ENCODE measurements at regions of chr19 and their contacts with region 1.

Region 1: DNA sequence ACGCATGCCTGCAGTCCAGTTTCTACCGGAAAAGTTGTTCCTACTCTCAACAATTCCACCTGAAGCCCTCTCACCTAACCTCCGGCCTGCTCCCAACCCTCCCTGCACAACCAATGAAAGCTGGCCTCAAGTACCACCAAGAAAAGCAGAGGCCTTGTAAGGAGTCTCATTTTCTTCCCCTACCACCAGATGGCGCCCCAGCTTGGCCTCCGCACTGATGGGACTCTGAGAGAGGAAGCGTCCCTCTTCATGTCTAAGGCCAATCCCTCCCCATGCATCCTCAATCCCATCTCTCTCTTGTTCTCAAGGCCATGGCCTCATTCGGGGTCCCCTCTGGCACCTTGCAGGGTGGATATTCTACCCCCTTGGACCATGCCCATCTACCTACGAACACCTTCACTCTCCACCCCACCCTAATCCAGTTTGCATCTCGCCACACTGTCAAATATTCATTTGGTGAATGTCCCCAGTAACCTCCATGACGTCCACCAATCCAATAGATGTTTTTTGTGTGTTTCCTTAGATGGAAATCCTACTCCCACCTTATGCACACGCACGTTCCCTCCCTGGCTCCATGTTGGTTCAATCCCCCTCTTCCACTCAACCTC is 412.8 kb downstream of the ZNF536 start:
- DNase-seq: peak; percentile 65
- H3K4me3 ChIP-seq: no peak overlapping the region
- H3K27ac ChIP-seq: no peak overlapping the region
- H3K4me1 ChIP-seq: no peaks in the 10 kb centered on the region
- H3K27me3 ChIP-seq: no peaks in the 10 kb centered on the region
- CTCF ChIP-seq: peak; percentile 57 to 77 (median 70)
- EP300 ChIP-seq: no peak
- POLR2A ChIP-seq: no peak

Region 2: GRCh38 chr19:31349160-31349881 is 564.4 kb after region 1 on chr19 and contains the start of gene TSHZ3:
- in situ Hi-C with region 1: loop called in 2 of 4 experiments (anchors 25 kb)
- intact Hi-C with region 1: no loop called
- DNase-seq: peak; percentile 72
- H3K4me3 ChIP-seq: peak within 1 kb of the TSS; percentile 71 to 97 (median 90)
- H3K27ac ChIP-seq: peak within 1 kb of the TSS; percentile 93 to 97 (median 96)
- H3K4me1 ChIP-seq: peaks cover 0 to 47% (median 18%) of the 10 kb centered on the region in 4 donors
- H3K27me3 ChIP-seq: peaks cover 87% of the 10 kb centered on the region
- CTCF ChIP-seq: no peak
- EP300 ChIP-seq: no peak
- POLR2A ChIP-seq: no peak
- total RNA-seq, gene TSHZ3: 3.0 to 6.4 (median 4.6) TPM

Region 3: GRCh38 chr19:32224371-32225244 is 1439.7 kb after region 1 on chr19:
- in situ Hi-C with region 1: no loop called
- intact Hi-C with region 1: loop called (anchors 10 kb)
- DNase-seq: peak; percentile 56
- H3K4me3 ChIP-seq: peak overlapping the region in 1 of 4 donors; percentile 32
- H3K27ac ChIP-seq: no peak overlapping the region
- H3K4me1 ChIP-seq: peaks cover 0 to 6% (median 1%) of the 10 kb centered on the region in 4 donors
- H3K27me3 ChIP-seq: peaks cover 32% of the 10 kb centered on the region
- CTCF ChIP-seq: peak; percentile 91 to 100 (median 100)
- EP300 ChIP-seq: no peak
- POLR2A ChIP-seq: no peak

Region 4: GRCh38 chr19:32475141-32476031 is 1690.4 kb after region 1 on chr19:
- in situ Hi-C with region 1: no loop called
- intact Hi-C with region 1: no loop called
- DNase-seq: no peak
- H3K4me3 ChIP-seq: no peak overlapping the region
- H3K27ac ChIP-seq: no peak overlapping the region
- H3K4me1 ChIP-seq: no peaks in the 10 kb centered on the region
- H3K27me3 ChIP-seq: no peaks in the 10 kb centered on the region
- CTCF ChIP-seq: no peak
- EP300 ChIP-seq: no peak
- POLR2A ChIP-seq: no peak